Activated CD4-positive, alpha-beta T cell treated with anti-CD3 and anti-CD28 coated beads, Interleukin-2, amount 10 ng/mL, durations not matched to agents 24 days and 14 days (primary cell): ENCODE measurements at regions of chr1 and their contacts with region 1.

Region 1: DNA sequence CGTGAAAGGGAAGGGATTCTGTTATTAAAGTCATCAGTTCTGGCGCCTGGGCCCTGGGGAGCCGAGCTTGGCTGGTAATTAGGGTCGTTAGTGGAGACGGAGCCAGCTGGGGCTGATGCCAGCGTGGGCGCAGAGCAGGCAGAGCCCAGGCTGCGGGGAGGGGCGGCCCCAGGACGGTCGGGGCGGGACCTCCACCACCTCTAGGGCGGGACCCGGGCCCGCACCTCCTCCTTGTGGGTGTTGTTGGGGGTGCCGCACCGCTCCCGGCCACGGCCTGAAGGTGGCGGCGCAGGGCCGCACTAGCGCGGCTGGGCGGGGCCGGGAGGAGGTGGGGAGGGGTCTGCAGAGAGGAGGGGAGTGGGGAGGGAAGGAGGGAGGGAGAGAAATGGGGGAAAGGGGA is 470.6 kb downstream of the PTPRU start:
- DNase-seq: peak; percentile 92
- H3K4me3 Mint-ChIP-seq: peak overlapping the region; percentile 20
- H3K27ac Mint-ChIP-seq: peak overlapping the region; percentile 50
- H3K4me1 Mint-ChIP-seq: peaks cover 38% of the 10 kb centered on the region
- H3K27me3 Mint-ChIP-seq: peaks cover 16% of the 10 kb centered on the region

Region 2: GRCh38 chr1:29633771-29634170 is 73.2 kb before region 1 on chr1:
- intact Hi-C with region 1: no loop called
- DNase-seq: no peak
- H3K4me3 Mint-ChIP-seq: no peak overlapping the region
- H3K27ac Mint-ChIP-seq: no peak overlapping the region
- H3K4me1 Mint-ChIP-seq: no peaks in the 10 kb centered on the region
- H3K27me3 Mint-ChIP-seq: peaks cover 7% of the 10 kb centered on the region

Region 3: GRCh38 chr1:29688471-29689365 is 18.2 kb before region 1 on chr1:
- intact Hi-C with region 1: loop called (anchors 1 kb)
- DNase-seq: peak; percentile 74
- H3K4me3 Mint-ChIP-seq: peak overlapping the region; percentile 38
- H3K27ac Mint-ChIP-seq: peak overlapping the region; percentile 80
- H3K4me1 Mint-ChIP-seq: peaks cover 29% of the 10 kb centered on the region
- H3K27me3 Mint-ChIP-seq: peaks cover 8% of the 10 kb centered on the region

Region 4: DNA sequence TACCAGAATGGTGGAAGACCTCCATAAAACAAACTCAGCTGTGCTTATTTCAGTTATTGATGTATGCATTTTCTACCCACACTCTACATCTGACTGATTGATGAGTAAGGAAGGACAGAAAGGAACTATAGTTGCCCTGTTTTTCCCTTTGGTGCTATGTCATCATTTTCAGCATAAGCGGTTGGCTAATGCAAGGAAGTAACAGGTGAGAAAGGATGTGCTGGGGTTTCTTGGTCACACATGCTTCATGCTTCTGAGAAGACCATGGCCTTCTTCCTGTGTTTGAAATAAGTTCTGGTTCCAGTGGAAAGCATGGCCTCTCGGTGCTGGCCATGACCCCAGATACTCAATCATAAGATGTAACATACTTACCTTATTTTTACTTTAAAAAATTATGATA is 70.6 kb after region 1 on chr1:
- intact Hi-C with region 1: loop called (anchors 2 kb)
- DNase-seq: no peak
- H3K4me3 Mint-ChIP-seq: no peak overlapping the region
- H3K27ac Mint-ChIP-seq: no peak overlapping the region
- H3K4me1 Mint-ChIP-seq: peaks cover 7% of the 10 kb centered on the region
- H3K27me3 Mint-ChIP-seq: peaks cover 15% of the 10 kb centered on the region

Region 5: DNA sequence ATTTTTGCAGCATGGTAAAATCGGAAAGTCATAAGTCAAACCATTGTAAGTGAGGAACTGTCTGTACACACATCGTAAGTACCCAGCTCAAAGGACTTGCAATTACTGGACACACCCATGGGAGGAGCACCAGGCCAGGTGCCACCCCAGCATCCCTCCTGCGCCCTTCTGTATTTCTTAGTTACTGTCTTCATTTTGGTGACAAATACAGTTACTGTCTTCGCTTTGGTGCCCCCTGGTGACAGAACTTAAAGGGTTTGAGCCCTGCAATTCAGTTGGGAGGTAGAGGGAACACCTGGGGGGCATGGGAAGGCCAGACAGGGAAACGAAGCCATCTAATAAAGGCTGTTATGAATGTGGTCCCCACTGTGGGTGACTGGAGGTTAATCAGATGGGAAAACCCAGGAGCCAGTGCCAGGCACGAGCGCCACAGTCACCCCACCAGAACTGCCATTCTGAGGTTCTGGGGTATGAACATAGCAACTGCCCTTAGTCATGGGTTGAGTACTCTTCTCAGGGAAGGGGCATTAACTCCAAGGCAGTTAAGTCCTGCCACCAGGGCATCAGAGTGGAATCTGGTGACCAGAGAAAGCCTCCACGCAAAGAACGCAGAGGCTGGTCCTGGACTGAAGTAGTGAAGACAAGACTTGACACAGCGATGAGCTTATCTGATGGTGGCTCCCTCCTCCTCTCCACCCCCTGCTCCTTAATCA is 142.2 kb after region 1 on chr1:
- intact Hi-C with region 1: loop called (anchors 1 kb)
- DNase-seq: peak; percentile 86
- H3K4me3 Mint-ChIP-seq: no peak overlapping the region
- H3K27ac Mint-ChIP-seq: no peak overlapping the region
- H3K4me1 Mint-ChIP-seq: no peaks in the 10 kb centered on the region
- H3K27me3 Mint-ChIP-seq: peaks cover 2% of the 10 kb centered on the region

Region 6: DNA sequence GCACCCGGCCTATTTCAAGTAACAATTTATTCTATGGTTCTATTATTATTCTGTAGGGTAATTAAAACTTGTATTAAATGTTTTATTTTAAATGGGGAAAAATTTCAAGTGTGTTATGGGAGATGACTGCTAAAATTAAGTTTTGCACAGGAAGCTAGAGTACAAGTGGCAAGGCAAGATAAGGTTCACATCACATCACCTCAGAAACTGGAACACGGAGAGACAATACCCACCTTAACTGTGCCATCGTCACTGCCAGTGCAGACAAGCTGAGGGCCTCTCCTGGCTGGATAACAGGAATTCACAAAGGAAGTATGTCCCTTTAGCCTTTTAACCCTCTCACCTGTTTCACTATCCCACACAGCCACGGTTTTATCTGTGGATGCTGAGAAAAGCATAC is 1582.1 kb after region 1 on chr1:
- intact Hi-C with region 1: no loop called
- DNase-seq: no peak
- H3K4me3 Mint-ChIP-seq: no peak overlapping the region
- H3K27ac Mint-ChIP-seq: no peak overlapping the region
- H3K4me1 Mint-ChIP-seq: peaks cover 5% of the 10 kb centered on the region
- H3K27me3 Mint-ChIP-seq: no peaks in the 10 kb centered on the region